ENCODE measurements at regions of chr12 and their contacts with region 1.

Region 1: GRCh38 chr12:94849411-94849976 is 154.0 kb downstream of the NDUFA12 start:
- DNase-seq: no peak
- ATAC-seq: peak; percentile 48
- H3K4me3 ChIP-seq: no peak overlapping the region
- H3K27ac ChIP-seq: no peak overlapping the region
- H3K4me1 ChIP-seq: peaks cover 7% of the 10 kb centered on the region
- H3K27me3 ChIP-seq: no peaks in the 10 kb centered on the region
- CTCF ChIP-seq: 0 out of 6 replicates have a peak, but pooled peaks of 1 of the 3 experiments have one; percentile 5
- EP300 ChIP-seq: no peak
- POLR2A ChIP-seq: no peak
- RAD21 ChIP-seq: no peak

Region 2: DNA sequence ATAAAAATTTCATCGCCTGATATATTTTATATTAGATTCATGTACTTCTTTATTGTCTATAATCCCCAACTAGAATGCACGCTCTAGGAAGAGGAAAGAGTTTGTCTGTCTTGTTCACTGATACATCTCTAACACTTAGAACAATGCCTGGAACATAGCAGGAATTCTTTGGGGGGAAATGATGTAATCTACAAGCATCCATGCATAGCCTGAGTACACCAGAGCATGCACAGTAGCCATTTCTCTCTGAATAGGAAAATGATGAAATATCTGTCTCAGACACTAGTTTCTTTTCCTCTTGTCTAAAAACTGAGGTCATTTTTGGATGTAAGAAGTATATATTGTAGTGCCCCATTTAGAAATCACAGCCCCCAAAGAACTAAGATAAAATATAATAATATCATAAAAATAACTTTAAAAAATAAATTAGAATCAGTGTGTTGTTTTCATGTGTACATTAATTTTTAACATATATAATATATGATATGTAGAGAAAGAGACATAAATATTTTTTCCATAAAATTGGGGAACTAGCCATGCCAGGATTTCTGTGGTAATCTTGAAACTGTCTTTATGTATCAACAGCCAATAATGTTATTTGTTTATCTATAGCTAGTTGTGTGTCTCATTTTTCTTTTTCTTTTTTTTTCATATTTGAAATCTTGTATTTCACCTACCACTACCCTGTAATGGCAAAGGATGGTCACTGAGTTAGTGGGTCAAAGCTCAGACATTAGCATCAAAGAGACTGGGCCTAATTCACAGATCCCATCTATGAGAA is 43.6 kb before region 1 on chr12:
- CTCF ChIA-PET with region 1: no interaction called
- POLR2A ChIA-PET with region 1: no interaction called
- RAD21 ChIA-PET with region 1: no interaction called
- SMC1A ChIA-PET with region 1: no interaction called
- in situ Hi-C with region 1: no loop called
- intact Hi-C with region 1: no loop called
- DNase-seq: no peak
- ATAC-seq: peak; percentile 80
- H3K4me3 ChIP-seq: no peak overlapping the region
- H3K27ac ChIP-seq: peak overlapping the region; percentile 17
- H3K4me1 ChIP-seq: peaks cover 21% of the 10 kb centered on the region
- H3K27me3 ChIP-seq: no peaks in the 10 kb centered on the region
- CTCF ChIP-seq: no peak
- EP300 ChIP-seq: no peak
- POLR2A ChIP-seq: no peak
- RAD21 ChIP-seq: no peak

Region 3: DNA sequence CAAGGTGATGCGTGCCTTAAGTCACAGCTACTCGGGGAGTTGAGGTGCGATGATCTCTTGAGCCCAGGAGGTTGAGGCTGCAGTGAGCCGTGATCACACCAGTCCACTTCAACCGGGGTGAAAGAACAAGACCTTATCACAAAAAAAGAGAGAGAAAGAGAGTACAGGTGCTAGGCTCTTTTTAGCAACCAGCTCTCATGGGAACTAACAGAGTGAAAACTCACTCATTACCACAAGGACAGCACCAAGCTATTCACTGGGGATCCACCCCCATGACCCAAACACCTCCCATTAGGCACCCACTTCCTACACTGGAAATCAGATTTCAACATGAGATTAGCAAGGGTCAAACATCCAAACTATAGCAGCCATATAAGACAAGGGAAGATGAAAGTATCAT is 10.1 kb before region 1 on chr12:
- CTCF ChIA-PET with region 1: interaction called, 13 read pairs
- POLR2A ChIA-PET with region 1: interaction called, 4 read pairs
- RAD21 ChIA-PET with region 1: no interaction called
- SMC1A ChIA-PET with region 1: interaction called, 9 read pairs
- in situ Hi-C with region 1: no loop called
- intact Hi-C with region 1: no loop called
- DNase-seq: peak; percentile 82
- ATAC-seq: peak; percentile 83
- H3K4me3 ChIP-seq: no peak overlapping the region
- H3K27ac ChIP-seq: peak overlapping the region; percentile 79
- H3K4me1 ChIP-seq: peaks cover 26% of the 10 kb centered on the region
- H3K27me3 ChIP-seq: no peaks in the 10 kb centered on the region
- CTCF ChIP-seq: no peak
- EP300 ChIP-seq: peak; percentile 52 to 75; a peak in 2 of 4 replicates
- POLR2A ChIP-seq: no peak
- RAD21 ChIP-seq: no peak

Region 4: GRCh38 chr12:94870511-94870910 is 21.0 kb after region 1 on chr12:
- CTCF ChIA-PET with region 1: interaction called, 10 read pairs
- POLR2A ChIA-PET with region 1: no interaction called
- RAD21 ChIA-PET with region 1: interaction called, 7 read pairs
- SMC1A ChIA-PET with region 1: interaction called, 15 read pairs
- in situ Hi-C with region 1: no loop called
- intact Hi-C with region 1: no loop called
- DNase-seq: no peak
- ATAC-seq: no peak
- H3K4me3 ChIP-seq: peak overlapping the region; percentile 92
- H3K27ac ChIP-seq: peak overlapping the region; percentile 91
- H3K4me1 ChIP-seq: peaks cover 22% of the 10 kb centered on the region; the same call in 1 of the 2 replicates
- H3K27me3 ChIP-seq: no peaks in the 10 kb centered on the region
- CTCF ChIP-seq: no peak
- EP300 ChIP-seq: no peak
- POLR2A ChIP-seq: no peak
- RAD21 ChIP-seq: no peak

Region 5: DNA sequence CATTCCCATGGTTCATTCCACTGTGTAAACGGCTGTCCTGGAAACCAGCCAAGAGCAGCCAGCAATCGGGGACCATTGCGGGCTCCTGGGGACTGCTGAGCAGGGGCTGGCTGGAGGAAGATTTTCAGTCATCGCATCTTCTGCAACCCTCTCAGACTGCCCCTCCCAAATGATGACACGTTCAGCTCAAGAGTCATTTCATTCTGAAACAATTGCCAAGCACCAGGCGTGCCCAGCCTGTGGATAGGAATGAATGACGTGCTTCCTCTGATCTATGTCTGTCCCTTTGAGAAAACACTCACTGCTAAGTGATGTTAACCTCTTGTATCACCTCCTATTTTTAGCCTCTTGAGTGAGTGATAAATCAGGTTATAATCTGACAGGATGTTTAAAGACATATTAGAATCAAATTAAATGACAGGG is 92.0 kb after region 1 on chr12:
- CTCF ChIA-PET with region 1: no interaction called
- POLR2A ChIA-PET with region 1: no interaction called
- RAD21 ChIA-PET with region 1: no interaction called
- SMC1A ChIA-PET with region 1: no interaction called
- in situ Hi-C with region 1: no loop called
- intact Hi-C with region 1: no loop called
- DNase-seq: no peak
- ATAC-seq: peak; percentile 66
- H3K4me3 ChIP-seq: no peak overlapping the region
- H3K27ac ChIP-seq: no peak overlapping the region
- H3K4me1 ChIP-seq: no peaks in the 10 kb centered on the region
- H3K27me3 ChIP-seq: no peaks in the 10 kb centered on the region
- CTCF ChIP-seq: no peak
- EP300 ChIP-seq: no peak
- POLR2A ChIP-seq: no peak
- RAD21 ChIP-seq: no peak

Measured in GM12878 (cell line).